A673 (cell line): ENCODE measurements at regions of chr4 and their contacts with region 1.

Region 1: DNA sequence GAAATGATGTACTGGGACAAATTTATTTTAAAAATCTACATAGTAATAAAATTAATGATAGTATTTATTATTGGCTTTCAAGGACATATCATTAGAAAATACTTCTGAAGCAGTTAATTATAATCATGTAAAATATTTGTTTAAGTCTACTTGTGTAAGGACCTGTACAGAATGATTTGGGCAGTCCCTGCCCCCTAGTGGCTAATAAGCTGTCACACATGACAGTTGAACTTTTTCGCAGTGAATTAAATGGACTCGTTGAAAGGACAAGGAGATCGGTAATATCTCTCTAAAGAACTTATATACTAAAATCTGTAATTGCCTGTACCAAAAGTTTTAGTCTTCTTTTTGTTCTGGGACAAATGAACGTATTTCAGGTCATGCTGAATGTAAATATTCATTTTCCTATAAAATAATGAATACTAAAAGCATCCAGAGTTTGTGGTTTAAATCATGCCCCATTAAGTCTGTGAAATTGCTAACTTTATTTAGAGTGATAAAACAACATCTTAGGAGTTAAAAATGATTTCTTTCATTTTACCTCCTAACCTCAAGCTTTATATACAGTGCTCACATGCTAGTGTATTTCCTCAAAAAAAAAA is 13.6 kb downstream of the EXOC1 start:
- DNase-seq: peak; percentile 67
- H3K4me3 ChIP-seq: no peak overlapping the region
- H3K27ac ChIP-seq: no peak overlapping the region
- H3K4me1 ChIP-seq: peaks cover 19% of the 10 kb centered on the region
- H3K27me3 ChIP-seq: no peaks in the 10 kb centered on the region
- CTCF ChIP-seq: peak; percentile 67

Region 2: GRCh38 chr4:54015423-54016030 is 1851.5 kb before region 1 on chr4:
- CTCF ChIA-PET with region 1: no interaction called
- POLR2A ChIA-PET with region 1: no interaction called
- intact Hi-C with region 1: no loop called
- DNase-seq: no peak
- H3K4me3 ChIP-seq: no peak overlapping the region
- H3K27ac ChIP-seq: no peak overlapping the region
- H3K4me1 ChIP-seq: no peaks in the 10 kb centered on the region
- H3K27me3 ChIP-seq: no peaks in the 10 kb centered on the region
- CTCF ChIP-seq: no peak

Region 3: GRCh38 chr4:55409468-55410171 is 457.5 kb before region 1 on chr4:
- CTCF ChIA-PET with region 1: no interaction called
- POLR2A ChIA-PET with region 1: no interaction called
- intact Hi-C with region 1: loop called (anchors 10 kb)
- DNase-seq: peak; percentile 85
- H3K4me3 ChIP-seq: peak overlapping the region; percentile 33
- H3K27ac ChIP-seq: peak overlapping the region; percentile 30
- H3K4me1 ChIP-seq: peaks cover 7% of the 10 kb centered on the region
- H3K27me3 ChIP-seq: no peaks in the 10 kb centered on the region
- CTCF ChIP-seq: peak; percentile 58

Region 4: DNA sequence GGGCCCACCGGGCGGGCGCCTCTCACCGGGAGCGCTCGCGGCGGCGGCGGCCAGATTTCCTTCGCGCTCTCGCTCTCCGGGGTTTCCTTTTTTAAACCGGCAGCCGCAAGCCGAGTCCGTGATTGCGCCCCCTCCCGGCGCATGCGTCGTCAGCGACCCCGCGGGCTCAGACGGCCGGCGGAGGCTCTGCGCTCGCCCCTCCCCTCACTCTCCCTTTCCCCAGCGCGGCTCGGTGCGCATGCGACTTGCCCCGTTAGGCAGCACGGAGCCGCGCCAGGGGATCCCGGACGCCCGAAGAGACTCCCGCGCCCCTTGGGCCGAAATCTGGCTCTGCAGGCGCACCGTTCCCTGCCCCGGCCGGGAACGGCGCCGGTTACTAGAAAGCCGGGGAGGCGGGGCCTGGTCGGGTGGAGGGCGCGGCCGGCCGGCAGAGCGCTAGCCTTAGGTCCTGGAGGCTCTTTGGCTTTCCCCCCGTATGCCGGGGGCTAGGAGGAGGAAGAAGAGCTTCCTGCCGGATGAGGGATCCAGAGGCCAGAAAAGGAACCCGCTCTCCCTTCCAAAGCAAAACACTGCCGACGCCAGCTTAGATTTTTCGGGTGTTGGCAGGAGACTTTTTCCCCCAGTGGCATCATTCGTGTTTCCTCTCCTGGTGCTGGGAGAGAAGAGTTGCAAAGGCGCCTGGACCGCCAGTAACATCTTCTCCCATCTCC is 320.2 kb before region 1 on chr4 and contains the start of gene CLOCK:
- CTCF ChIA-PET with region 1: no interaction called
- POLR2A ChIA-PET with region 1: no interaction called
- intact Hi-C with region 1: loop called (anchors 10 kb)
- DNase-seq: peak; percentile 84
- H3K4me3 ChIP-seq: peak within 1 kb of the TSS; percentile 73
- H3K27ac ChIP-seq: peak within 1 kb of the TSS; percentile 87
- H3K4me1 ChIP-seq: peaks cover 5% of the 10 kb centered on the region
- H3K27me3 ChIP-seq: no peaks in the 10 kb centered on the region
- CTCF ChIP-seq: peak; percentile 42; the same call in 1 of the 2 replicates
- total RNA-seq, gene CLOCK: 14.9 TPM in 2 replicates

Region 5: DNA sequence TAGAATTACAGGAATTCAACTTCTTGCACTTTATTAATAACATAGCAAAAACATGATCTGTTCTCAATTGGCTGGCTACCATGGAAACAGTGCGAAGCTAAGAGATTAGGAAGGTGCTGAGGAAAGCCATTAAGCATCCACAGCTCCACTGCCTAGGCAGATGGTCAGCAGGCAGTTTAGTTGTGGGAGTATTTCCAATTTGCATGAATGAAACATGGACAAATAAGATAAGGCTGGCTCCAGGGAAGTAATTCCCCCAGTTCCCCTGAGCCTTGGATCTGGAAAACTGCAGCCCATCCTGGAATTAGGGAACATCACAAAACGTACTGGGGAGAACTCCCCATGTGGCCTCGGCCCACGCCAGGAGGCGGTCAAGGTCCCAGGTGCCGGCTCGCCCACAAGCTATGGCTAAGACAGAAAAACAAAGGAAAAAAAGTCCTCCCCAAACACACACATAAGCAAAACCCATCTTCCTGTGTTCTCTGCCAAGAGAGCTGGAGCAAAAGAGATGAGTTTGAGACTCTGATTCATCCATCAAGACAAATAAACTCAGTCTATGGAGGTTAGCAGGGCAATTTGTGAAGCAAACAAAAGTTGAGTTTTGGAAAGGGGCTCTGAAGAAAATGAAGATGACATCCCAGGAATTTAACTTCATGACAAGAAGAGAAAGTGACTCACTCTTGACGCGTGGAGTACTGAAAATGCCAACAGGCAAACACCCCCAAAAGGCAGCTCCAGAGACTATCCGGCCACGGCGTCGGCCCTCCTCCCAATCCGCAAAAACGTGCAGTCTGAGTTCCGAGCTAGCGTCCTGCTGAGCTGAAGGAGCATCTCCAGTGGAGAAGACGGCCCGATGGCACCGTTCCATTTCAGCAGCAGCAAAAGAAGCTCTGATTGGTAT is 1198.0 kb after region 1 on chr4:
- CTCF ChIA-PET with region 1: no interaction called
- POLR2A ChIA-PET with region 1: no interaction called
- intact Hi-C with region 1: no loop called
- DNase-seq: no peak
- H3K4me3 ChIP-seq: no peak overlapping the region
- H3K27ac ChIP-seq: no peak overlapping the region
- H3K4me1 ChIP-seq: no peaks in the 10 kb centered on the region
- H3K27me3 ChIP-seq: no peaks in the 10 kb centered on the region
- CTCF ChIP-seq: no peak